PC-9 (cell line): ENCODE measurements at regions of chrX and their contacts with region 1.

Region 1: GRCh38 chrX:65644621-65645270 is 22.7 kb upstream of the MSN start:
- DNase-seq: peak; percentile 58 to 68
- H3K4me3 ChIP-seq: no peak overlapping the region
- H3K27ac ChIP-seq: peak overlapping the region; percentile 68
- H3K4me1 ChIP-seq: peaks cover 33% of the 10 kb centered on the region
- H3K27me3 ChIP-seq: no peaks in the 10 kb centered on the region
- CTCF ChIP-seq: no peak

Region 2: GRCh38 chrX:65667503-65668376 is 23.0 kb after region 1 on chrX and contains the start of gene MSN:
- CTCF ChIA-PET with region 1: no interaction called
- POLR2A ChIA-PET with region 1: interaction called, 3 read pairs
- intact Hi-C with region 1: loop called (anchors 2 kb)
- DNase-seq: peak in 1 of 2 experiments; percentile 76
- H3K4me3 ChIP-seq: peak within 1 kb of the TSS; percentile 79
- H3K27ac ChIP-seq: peak within 1 kb of the TSS; percentile 97
- H3K4me1 ChIP-seq: peaks cover 11% of the 10 kb centered on the region
- H3K27me3 ChIP-seq: no peaks in the 10 kb centered on the region
- CTCF ChIP-seq: no peak
- total RNA-seq, gene MSN: 177 and 235 TPM in 2 replicates

Region 3: GRCh38 chrX:65706041-65706828 is 61.5 kb after region 1 on chrX:
- CTCF ChIA-PET with region 1: interaction called, 15 read pairs
- POLR2A ChIA-PET with region 1: no interaction called
- intact Hi-C with region 1: loop called (anchors 1 kb)
- DNase-seq: peak; percentile 61 to 63
- H3K4me3 ChIP-seq: no peak overlapping the region
- H3K27ac ChIP-seq: peak overlapping the region; percentile 29
- H3K4me1 ChIP-seq: peaks cover 21% of the 10 kb centered on the region
- H3K27me3 ChIP-seq: no peaks in the 10 kb centered on the region
- CTCF ChIP-seq: no peak

Region 4: GRCh38 chrX:65731684-65732289 is 87.0 kb after region 1 on chrX:
- CTCF ChIA-PET with region 1: interaction called, 12 read pairs
- POLR2A ChIA-PET with region 1: no interaction called
- intact Hi-C with region 1: no loop called
- DNase-seq: no peak
- H3K4me3 ChIP-seq: no peak overlapping the region
- H3K27ac ChIP-seq: no peak overlapping the region
- H3K4me1 ChIP-seq: no peaks in the 10 kb centered on the region
- H3K27me3 ChIP-seq: no peaks in the 10 kb centered on the region
- CTCF ChIP-seq: no peak

Region 5: GRCh38 chrX:66150163-66150562 is 505.4 kb after region 1 on chrX:
- CTCF ChIA-PET with region 1: no interaction called
- POLR2A ChIA-PET with region 1: no interaction called
- intact Hi-C with region 1: no loop called
- DNase-seq: no peak
- H3K4me3 ChIP-seq: no peak overlapping the region
- H3K27ac ChIP-seq: no peak overlapping the region
- H3K4me1 ChIP-seq: no peaks in the 10 kb centered on the region
- H3K27me3 ChIP-seq: no peaks in the 10 kb centered on the region
- CTCF ChIP-seq: no peak